GM10248 (cell line): ENCODE measurements at regions of chr20 and their contacts with region 1.

Region 1: DNA sequence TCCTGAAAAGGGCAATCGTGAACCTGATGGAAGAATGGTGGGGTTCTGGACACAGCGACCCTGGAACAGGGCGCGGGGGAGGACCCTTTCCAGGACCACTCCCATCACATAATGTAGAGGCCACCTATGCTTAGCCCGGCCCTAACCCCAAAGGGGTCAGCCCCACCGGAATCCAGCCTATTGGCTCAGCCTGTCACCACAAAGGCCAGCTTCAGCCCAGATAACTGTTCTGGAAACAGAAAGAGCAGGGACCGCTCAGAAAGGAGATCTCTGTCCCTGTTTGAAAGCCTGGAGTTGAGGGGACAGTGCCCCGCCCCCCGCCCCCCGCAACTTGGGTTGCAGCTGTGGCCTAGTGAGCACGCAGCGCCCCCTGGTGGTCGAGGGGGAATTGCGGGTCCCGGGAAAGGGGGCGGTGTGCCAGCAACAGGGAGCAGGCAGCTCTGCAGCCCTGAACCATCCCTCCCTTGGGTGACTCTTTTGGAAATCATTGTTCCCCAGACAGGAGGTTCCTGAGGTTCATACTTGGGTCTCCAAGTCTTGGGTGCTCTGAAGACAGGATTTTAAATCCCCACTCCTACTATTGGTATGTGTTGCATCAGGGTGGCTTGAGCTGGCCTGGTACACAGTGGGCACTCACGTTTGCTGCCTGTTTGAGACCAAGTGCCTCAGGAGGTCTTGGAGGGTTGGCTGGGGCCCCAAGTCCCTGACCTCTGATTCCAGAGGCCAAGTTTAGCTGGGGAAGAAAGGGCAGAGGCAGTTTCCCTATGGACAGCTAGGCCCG is 1.5 kb downstream of the SIGLEC1 start:
- DNase-seq: peak; percentile 89
- CTCF ChIP-seq: peak; percentile 96

Region 2: DNA sequence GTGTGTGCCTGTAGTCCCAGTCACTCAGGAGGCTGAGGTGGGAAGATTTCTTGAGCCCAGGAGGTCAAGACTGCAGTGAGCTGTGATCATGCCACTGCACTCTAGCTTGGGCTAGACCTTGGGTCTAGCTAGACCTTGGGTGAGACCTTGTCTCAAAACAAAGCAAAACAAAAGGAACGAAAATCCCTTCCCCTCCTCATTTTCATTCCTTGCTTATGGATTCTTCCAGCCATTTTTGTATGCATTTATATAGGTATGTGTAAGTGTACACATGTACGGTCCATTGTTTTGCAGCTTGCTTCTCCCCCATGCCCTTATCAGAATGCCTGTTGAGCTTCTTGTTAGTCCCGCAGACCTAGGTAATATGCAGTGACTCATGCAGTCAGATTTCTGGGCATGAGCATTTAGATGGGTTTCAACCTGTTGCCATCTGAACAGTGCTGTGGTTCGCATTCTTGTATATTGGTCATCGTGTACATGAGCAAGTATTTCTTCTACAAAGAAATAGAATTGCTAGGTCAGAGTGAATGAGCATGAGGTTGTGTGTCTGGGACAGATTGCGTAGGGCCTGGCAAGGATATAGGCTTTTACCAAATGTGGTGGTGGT is 166.9 kb before region 1 on chr20:
- CTCF ChIA-PET with region 1: no interaction called
- POLR2A ChIA-PET with region 1: no interaction called
- DNase-seq: no peak
- CTCF ChIP-seq: no peak

Region 3: GRCh38 chr20:3670511-3670910 is 40.4 kb before region 1 on chr20:
- CTCF ChIA-PET with region 1: interaction called, 69 read pairs
- POLR2A ChIA-PET with region 1: no interaction called
- DNase-seq: no peak
- CTCF ChIP-seq: no peak

Region 4: DNA sequence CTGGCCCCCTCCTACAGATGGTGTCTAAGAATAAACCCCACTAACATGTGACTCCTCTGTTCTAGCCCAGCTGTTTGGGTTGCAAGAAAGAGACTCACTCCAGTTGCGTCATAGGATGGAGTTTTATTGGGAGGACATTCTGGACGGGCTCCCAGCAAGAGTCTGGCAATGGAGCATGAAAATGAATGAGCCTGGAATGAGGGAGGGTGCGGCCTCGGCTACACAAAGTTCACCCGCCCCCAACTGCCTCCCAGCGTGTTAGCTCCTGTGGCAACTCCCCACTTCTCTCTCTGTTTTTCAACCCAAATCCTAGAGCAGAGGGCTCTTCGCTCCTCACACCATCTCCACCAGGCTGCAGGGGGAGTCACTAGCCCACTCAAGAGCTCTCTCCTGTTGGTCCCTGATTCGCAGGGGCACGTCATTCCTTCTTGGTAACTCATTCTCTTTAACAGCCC is 24.0 kb before region 1 on chr20:
- CTCF ChIA-PET with region 1: interaction called, 17 read pairs
- POLR2A ChIA-PET with region 1: no interaction called
- DNase-seq: no peak
- CTCF ChIP-seq: no peak

Region 5: DNA sequence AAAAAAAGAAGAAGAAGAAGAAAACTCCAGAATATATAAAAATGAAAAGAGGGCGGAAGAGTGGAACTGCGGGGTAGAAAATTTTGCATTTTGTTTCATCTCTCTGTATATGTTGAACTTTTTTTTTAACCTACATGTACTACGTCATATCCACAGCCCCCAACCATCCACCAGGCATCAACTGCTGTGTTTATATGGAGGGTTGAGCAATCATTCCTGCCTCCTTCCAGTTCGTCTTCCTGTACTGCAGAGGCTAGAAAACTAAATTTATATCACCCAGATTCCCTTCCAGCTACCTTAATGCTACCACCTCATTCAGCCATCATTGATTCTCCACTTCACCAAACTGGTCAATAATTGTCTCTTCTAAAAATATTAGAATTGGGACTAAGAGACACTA is 11.0 kb after region 1 on chr20:
- CTCF ChIA-PET with region 1: interaction called, 27 read pairs
- POLR2A ChIA-PET with region 1: no interaction called
- DNase-seq: no peak
- CTCF ChIP-seq: no peak

Region 6: DNA sequence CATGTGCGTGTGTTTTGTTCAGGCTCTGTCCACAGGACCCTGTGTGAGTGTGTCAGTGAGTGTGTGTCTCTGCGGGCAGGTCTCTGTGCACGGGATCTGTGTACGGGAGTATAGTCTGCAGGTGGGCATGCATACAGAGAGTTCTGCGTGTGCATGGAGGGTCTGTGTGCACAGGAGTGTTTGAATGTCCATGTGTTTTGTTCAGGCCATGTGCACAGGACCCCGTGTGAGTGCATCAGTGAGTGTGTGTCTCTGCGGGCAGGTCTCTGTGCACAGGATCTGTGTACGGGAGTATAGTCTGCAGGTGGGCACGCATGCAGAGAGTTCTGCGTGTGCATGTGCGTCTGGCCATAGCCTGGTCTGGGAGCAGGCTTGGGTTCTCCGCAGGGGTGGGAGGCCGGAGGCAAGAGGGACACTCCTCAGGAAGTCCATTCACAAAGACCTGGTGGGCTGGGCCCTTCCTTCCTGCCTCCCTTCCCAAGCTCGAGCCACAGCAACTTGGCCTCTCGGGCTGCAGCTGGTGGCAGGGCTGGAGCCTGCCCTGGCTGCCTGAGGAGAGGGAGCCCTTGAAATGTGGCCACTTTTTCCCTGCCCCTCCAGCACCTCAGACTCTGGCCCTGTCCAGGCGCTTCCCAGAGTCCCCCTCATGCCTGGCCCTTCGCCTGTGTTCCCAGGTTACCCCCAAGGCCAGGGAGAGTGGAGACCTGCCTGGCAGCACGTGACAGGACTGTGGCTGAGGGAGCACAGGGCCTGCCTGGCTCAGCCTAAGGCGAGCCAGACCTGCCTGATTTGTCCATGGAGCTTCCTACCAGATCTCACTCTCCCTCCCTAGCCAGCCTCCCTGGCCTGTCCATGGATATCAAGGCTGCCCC is 28.4 kb after region 1 on chr20:
- CTCF ChIA-PET with region 1: interaction called, 16 read pairs
- POLR2A ChIA-PET with region 1: no interaction called
- DNase-seq: no peak
- CTCF ChIP-seq: no peak

Region 7: DNA sequence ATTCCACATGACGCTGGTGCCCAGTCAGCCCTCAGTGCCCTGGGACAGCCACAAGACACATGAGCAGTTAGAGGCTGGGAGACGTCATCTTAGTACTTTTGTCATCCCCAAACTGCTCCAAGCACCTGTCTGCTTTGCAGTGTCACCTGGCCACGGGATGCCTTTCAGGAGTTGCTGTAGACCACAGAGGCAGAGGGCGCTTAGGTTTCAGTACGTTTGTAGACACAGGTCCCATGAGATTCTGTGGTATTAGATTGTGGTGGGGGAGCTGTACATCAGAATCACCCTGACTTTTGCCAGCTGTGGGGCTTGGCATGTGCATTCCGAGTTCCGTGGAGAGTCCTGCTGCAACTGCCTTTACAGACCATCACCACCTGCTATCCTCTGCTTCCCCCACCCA is 152.4 kb after region 1 on chr20:
- CTCF ChIA-PET with region 1: no interaction called
- POLR2A ChIA-PET with region 1: no interaction called
- DNase-seq: no peak
- CTCF ChIP-seq: no peak